Activated naive CD4-positive, alpha-beta T cell treated with anti-CD3 and anti-CD28 coated beads, Interleukin-2, amount 10 ng/mL, durations not matched to agents 7 days and 5 days (primary cell): ENCODE measurements at regions of chr7 and their contacts with region 1.

Region 1: GRCh38 chr7:39732837-39733804 is 109.7 kb downstream of the RALA start:
- DNase-seq: peak; percentile 95
- H3K4me3 Mint-ChIP-seq: peak overlapping the region; percentile 79
- H3K27ac Mint-ChIP-seq: peak overlapping the region; percentile 90
- H3K4me1 Mint-ChIP-seq: peaks cover 52% of the 10 kb centered on the region
- H3K27me3 Mint-ChIP-seq: peaks cover 14% of the 10 kb centered on the region

Region 2: GRCh38 chr7:39746103-39746819 is 13.1 kb after region 1 on chr7:
- CTCF ChIA-PET with region 1: interaction called, 56 read pairs
- DNase-seq: peak; percentile 73
- H3K4me3 Mint-ChIP-seq: no peak overlapping the region
- H3K27ac Mint-ChIP-seq: no peak overlapping the region
- H3K4me1 Mint-ChIP-seq: peaks cover 6% of the 10 kb centered on the region
- H3K27me3 Mint-ChIP-seq: no peaks in the 10 kb centered on the region